ENCODE measurements at regions of chr7 and their contacts with region 1.

Region 1: DNA sequence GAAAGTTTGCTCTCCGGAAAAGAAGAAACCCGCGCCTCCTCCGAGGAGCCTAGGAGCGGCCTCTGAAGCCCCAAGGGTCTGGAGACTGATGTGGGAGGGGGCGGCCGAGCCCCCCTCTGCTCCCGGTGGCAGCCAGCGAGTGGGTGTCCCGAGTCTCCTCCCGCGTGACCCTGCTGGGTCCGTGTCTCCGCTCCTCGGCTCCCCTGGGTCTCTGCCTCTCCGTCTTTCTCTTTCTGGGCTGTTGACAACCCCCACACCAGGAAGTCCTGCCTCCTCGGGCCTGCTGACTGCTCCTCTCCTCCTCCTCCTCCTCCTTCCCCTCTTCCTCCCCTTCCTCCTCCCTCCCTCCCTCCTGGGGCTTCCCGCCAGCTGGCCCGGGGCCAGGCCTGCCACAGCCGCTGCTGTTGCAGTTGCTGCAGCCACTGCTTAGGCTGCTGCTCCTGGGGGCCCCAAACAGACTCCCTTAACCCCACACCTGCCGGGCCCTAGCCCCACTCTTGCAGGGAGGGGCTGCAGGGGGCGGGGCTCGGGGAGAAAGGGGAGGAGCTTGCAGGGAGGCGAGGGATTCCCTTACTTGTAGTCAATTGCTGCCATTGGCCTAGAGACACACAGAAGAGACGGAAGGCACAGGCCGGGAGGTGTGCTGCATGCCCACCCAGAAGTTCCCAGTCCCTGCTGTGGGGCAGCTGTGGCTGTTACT is at the start of gene TSC22D4:
- DNase-seq: peak; percentile 95 to 97
- ATAC-seq: peak; percentile 88 to 94 (median 92)
- H3K4me3 ChIP-seq: peak within 1 kb of the TSS; percentile 74 to 100 (median 98)
- H3K27ac ChIP-seq: peak within 1 kb of the TSS; percentile 87 to 100 (median 96)
- H3K4me1 ChIP-seq: peaks cover 10 to 61% (median 50%) of the 10 kb centered on the region in 9 donors
- H3K27me3 ChIP-seq: no peaks in the 10 kb centered on the region
- CTCF ChIP-seq: no peak
- total RNA-seq, gene TSC22D4: 36.0 to 72.3 (median 46.7) TPM

Region 2: DNA sequence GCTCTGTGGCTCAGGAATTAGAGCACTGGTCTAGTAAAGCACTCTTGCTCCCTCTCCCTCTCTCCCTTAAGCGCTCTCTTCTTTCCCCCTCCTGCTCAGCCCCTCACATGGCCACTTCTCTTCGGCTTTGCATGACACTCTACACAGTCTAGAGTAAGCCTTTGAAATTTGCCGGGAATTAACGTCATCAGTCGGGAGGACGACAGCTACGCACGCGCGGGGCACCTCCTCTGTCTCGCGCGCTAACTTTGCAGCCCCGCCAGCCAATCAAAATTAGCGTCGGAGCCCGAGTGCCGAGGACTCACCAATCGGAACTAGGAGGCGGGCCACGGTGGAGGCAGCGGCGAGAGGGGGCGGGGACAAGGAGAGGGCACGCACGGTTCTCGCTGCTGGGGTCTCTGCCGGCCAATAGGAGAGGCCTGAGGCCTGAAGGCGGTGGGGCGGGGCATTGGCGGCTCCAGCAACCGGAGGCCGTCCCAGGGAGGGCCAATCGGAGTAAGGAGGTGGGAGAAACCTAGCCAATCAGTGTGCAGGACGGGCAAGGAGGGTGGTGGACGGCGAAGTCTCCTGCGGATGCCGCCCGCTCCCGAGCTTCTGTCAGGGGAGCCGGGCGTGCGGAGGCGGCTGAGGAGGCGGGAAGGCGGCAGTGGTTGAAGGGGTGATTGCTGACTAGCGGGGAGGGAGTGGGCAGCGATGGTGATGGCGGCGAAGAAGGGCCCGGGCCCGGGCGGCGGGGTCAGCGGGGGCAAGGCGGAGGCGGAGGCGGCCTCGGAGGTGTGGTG is 59.7 kb after region 1 on chr7 and contains the start of gene AGFG2:
- intact Hi-C with region 1: loop called in 1 of 10 experiments (anchors 5 kb)
- DNase-seq: peak; percentile 100
- ATAC-seq: peak; percentile 99 to 100 (median 100)
- H3K4me3 ChIP-seq: peak within 1 kb of the TSS; percentile 64 to 94 (median 84)
- H3K27ac ChIP-seq: peak within 1 kb of the TSS in 9 of 10 donors; percentile 59 to 84 (median 75)
- H3K4me1 ChIP-seq: peaks cover 6 to 27% (median 16%) of the 10 kb centered on the region in 9 donors
- H3K27me3 ChIP-seq: no peaks in the 10 kb centered on the region
- CTCF ChIP-seq: no peak
- total RNA-seq, gene AGFG2: 20.7 to 35.8 (median 28.4) TPM

Region 3: DNA sequence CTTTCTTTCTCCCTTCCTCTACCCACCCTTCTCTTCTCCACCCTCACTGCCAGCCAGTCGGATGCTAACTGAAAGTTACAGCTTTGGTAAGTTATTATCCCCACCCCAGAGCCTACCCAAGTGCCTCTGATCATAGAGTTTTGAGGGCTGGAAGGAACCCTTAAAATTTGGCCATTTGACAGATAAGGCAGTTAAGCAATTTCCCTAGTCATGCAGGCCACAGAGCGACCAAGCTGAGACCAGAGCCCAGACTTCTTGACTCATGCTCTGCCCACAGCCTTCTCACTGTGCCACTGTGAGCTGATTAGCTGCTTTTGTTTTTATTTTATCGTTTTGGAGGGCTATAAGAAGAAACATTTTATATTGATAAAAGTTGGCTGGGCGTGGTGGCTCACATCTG is 77.4 kb after region 1 on chr7:
- intact Hi-C with region 1: loop called in 1 of 10 experiments (anchors 5 kb)
- DNase-seq: no peak
- ATAC-seq: no peak
- H3K4me3 ChIP-seq: no peak overlapping the region
- H3K27ac ChIP-seq: peak overlapping the region in 1 of 10 donors; percentile 26
- H3K4me1 ChIP-seq: peaks cover 0 to 20% (median 6%) of the 10 kb centered on the region in 9 donors
- H3K27me3 ChIP-seq: no peaks in the 10 kb centered on the region
- CTCF ChIP-seq: no peak

Region 4: DNA sequence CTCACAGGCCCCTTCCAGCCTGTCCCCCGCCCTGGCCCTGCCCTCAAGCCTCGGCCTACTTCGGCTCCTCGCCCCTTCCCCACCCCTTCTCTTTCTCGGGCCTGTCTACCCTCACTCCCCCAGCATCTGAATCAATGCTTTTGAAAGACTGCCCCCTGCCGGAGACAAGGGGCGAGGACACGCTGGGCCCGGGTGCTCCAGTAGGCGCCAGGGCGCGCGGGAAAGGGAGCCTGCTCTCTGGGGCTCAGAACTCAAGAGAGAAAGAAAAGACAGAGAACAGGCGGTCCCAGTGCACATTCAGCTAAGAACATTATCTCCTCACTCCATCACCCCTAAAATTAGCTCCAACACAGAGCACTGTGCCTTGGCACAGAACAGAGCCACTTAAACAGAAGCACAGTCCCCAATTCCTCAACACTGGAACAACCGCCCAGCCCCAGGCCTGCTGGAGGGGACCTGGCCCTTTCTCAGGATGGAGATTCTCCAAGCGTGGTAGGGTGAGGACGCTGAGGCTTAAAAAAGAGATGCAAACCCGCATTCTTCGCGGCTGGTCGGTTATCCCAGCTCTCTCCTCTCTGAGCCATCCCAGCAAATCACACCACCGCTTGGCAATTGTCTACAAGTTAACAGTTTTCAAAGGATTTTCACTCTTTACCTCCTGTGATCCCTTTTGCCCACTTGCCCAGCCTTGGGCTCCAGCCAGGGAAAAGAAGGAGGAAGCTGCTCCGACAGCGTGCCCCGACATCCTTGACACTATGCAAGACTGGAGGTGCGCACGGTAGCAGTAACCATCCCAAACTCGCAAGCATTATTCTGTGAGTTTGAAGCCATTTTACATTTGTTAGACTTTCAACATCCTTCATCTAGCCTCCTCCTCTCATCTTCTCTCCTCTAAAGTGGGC is 212.8 kb after region 1 on chr7:
- intact Hi-C with region 1: loop called in 3 of 10 experiments (anchors 5 to 10 kb)
- DNase-seq: peak; percentile 81 to 83
- ATAC-seq: peak; percentile 72 to 92 (median 86)
- H3K4me3 ChIP-seq: peak overlapping the region in 9 of 10 donors; percentile 3 to 99 (median 80)
- H3K27ac ChIP-seq: peak overlapping the region in 6 of 10 donors; percentile 15 to 87 (median 46)
- H3K4me1 ChIP-seq: peaks cover 34 to 67% (median 51%) of the 10 kb centered on the region in 9 donors
- H3K27me3 ChIP-seq: no peaks in the 10 kb centered on the region
- CTCF ChIP-seq: peak; percentile 70 to 92 (median 90)

Region 5: DNA sequence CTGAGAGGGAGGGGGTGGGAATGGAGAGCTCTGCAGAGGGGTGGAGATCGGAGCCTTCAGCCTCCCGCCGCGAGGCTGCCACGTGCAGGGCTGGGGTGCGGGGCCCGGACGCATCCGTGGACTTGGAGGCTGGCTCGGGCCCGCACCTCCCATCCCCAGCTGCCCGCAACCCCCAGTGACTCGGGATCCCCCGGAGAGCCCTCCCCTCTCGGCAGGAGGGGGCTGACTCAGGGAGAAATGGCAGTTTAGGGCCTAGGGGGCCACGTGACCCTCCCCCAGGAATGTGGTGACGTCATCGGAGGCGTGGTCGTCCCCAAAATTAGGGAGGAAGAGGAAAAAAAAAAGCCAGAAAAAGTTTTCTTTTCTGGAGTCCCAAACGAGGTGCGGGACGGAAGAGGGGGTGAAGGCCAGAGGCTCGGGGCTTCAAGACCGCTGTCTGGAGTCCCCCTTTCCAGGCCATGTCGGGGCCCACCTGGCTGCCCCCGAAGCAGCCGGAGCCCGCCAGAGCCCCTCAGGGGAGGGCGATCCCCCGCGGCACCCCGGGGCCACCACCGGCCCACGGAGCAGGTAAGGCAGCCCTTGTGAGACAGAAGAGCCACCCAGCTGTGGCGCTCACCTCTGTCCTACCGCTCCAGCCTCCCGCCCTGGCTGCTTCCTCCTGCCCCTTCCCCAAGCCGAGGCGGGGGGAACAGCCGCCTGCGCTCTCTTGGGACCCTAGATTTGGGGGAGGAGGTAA is 388.1 kb after region 1 on chr7 and contains the start of gene TRIP6:
- intact Hi-C with region 1: loop called in 1 of 10 experiments (anchors 10 kb)
- DNase-seq: peak; percentile 86 to 93
- ATAC-seq: peak; percentile 66 to 84 (median 78)
- H3K4me3 ChIP-seq: peak within 1 kb of the TSS; percentile 74 to 99 (median 92)
- H3K27ac ChIP-seq: peak within 1 kb of the TSS; percentile 85 to 99 (median 96)
- H3K4me1 ChIP-seq: peaks cover 7 to 50% (median 26%) of the 10 kb centered on the region in 9 donors
- H3K27me3 ChIP-seq: no peaks in the 10 kb centered on the region
- CTCF ChIP-seq: no peak
- total RNA-seq, gene TRIP6: 13.0 to 23.7 (median 17.7) TPM

Measured in heart right ventricle (tissue), 16 donors.